MCF 10A (cell line): ENCODE measurements at regions of chr13 and their contacts with region 1.

Region 1: DNA sequence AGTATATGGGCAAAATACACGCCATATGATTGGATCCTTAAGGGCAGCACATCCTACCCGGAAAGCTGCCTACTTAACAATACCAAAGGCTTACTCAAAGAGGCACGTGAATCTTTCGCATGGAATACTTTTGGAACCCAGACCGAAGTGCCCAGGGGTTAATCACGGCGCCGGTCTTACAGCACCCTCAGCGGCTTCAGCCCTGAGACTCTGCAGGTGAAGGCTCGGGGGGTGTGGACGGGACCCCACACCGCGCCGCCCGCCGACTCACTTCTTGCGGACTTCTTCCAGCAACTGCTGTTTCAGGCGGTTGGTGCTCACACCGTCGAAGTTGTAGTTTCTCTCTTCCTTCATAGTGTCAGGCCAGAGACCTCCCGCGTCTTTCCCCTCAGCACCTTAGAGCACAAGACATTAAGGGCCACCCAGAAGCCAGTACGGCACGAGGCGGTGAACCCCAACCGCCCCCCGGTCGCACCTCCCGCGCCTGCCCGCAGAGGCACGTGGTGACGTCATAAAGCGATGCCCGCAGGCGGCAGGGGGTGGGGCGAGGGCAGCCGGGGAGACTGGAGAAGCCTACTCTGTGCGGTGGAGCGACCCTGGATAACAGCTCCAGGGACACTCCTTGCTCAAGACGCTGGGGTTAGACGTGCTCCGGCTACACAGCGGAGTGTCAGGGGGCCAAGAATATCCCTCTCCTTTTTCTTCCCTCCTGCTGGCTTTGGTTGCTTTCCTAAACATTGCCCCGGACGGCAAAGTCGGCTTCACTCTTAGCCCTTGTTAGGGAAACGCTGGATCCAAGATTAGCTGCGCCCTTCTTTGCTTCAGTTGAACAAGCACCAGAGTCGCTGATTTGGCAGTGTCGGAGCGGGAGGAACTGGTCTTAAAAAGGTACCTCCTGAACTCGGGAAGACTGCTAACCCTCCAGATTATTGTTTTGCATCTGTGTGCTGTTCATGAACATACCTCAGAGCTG is at the start of gene CCDC169:
- DNase-seq: peak; percentile 67
- H3K4me3 Mint-ChIP-seq: peak within 1 kb of the TSS; percentile 87
- H3K27ac Mint-ChIP-seq: peak within 1 kb of the TSS; percentile 76
- H3K4me1 Mint-ChIP-seq: peaks cover 16% of the 10 kb centered on the region
- H3K27me3 Mint-ChIP-seq: no peaks in the 10 kb centered on the region
- CTCF ChIP-seq: no peak
- total RNA-seq, gene CCDC169: 5.7 and 5.9 TPM in 2 replicates

Region 2: DNA sequence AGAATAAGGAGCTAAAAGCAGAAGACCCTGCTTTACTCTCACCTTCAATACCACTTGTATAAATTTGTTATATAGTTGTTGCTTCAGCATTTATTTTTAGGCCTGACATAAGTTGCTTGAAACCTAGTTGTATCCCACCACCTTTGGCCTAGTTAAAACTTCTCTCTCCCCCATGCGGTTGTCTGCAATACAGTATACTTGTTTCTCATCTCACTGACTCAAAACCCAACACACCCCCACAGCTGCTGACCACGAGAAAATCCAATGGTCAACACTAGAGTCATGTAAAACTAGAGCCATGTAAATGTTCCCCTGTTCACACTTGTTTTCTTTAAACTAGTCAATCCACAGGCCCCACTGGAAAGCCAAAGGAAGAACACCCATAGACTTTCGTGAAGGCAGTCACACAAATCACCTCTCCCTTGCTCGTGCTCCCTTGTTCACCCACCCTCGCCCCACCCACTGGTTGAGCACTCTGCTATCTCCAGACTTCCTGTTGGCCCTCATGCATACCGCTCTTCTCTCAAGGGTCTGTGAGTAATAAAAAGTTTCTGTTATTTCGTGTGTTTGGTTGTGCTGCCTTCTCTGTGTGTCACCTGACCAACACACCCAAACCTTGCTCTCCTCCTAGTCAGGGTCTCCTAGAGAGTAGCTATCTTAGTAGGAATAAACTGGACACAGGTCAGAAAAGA is 12.9 kb after region 1 on chr13:
- CTCF ChIA-PET with region 1: interaction called, 3 read pairs
- POLR2A ChIA-PET with region 1: interaction called, 10 read pairs
- intact Hi-C with region 1: no loop called
- DNase-seq: no peak
- H3K4me3 Mint-ChIP-seq: no peak overlapping the region
- H3K27ac Mint-ChIP-seq: no peak overlapping the region
- H3K4me1 Mint-ChIP-seq: no peaks in the 10 kb centered on the region
- H3K27me3 Mint-ChIP-seq: no peaks in the 10 kb centered on the region
- CTCF ChIP-seq: no peak

Region 3: DNA sequence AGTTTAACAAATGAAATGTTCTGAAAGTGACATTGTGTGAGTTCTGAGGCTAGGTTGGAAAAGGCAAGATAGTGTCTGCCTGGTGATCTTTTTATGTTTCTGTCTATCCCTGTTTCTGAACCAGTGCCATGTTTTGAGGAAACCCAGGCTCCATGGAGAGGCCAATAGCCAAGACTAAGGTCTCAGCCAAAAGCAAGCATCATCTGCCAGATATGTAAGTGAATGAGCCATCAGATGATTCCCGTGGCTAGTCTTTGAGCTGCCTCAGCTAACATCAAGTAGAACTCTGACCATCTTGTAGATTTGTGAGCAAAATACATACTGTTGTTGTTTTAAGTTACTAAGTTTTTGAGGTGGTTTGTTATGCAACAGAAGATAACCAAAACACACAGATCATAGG is 115.1 kb after region 1 on chr13:
- CTCF ChIA-PET with region 1: no interaction called
- POLR2A ChIA-PET with region 1: no interaction called
- intact Hi-C with region 1: no loop called
- DNase-seq: no peak
- H3K4me3 Mint-ChIP-seq: no peak overlapping the region
- H3K27ac Mint-ChIP-seq: no peak overlapping the region
- H3K4me1 Mint-ChIP-seq: no peaks in the 10 kb centered on the region
- H3K27me3 Mint-ChIP-seq: no peaks in the 10 kb centered on the region
- CTCF ChIP-seq: no peak

Region 4: GRCh38 chr13:36461506-36461905 is 163.9 kb after region 1 on chr13:
- CTCF ChIA-PET with region 1: no interaction called
- POLR2A ChIA-PET with region 1: no interaction called
- intact Hi-C with region 1: no loop called
- DNase-seq: no peak
- H3K4me3 Mint-ChIP-seq: no peak overlapping the region
- H3K27ac Mint-ChIP-seq: no peak overlapping the region
- H3K4me1 Mint-ChIP-seq: no peaks in the 10 kb centered on the region
- H3K27me3 Mint-ChIP-seq: no peaks in the 10 kb centered on the region
- CTCF ChIP-seq: no peak